ENCODE measurements at regions of chr5 and their contacts with region 1.

Region 1: DNA sequence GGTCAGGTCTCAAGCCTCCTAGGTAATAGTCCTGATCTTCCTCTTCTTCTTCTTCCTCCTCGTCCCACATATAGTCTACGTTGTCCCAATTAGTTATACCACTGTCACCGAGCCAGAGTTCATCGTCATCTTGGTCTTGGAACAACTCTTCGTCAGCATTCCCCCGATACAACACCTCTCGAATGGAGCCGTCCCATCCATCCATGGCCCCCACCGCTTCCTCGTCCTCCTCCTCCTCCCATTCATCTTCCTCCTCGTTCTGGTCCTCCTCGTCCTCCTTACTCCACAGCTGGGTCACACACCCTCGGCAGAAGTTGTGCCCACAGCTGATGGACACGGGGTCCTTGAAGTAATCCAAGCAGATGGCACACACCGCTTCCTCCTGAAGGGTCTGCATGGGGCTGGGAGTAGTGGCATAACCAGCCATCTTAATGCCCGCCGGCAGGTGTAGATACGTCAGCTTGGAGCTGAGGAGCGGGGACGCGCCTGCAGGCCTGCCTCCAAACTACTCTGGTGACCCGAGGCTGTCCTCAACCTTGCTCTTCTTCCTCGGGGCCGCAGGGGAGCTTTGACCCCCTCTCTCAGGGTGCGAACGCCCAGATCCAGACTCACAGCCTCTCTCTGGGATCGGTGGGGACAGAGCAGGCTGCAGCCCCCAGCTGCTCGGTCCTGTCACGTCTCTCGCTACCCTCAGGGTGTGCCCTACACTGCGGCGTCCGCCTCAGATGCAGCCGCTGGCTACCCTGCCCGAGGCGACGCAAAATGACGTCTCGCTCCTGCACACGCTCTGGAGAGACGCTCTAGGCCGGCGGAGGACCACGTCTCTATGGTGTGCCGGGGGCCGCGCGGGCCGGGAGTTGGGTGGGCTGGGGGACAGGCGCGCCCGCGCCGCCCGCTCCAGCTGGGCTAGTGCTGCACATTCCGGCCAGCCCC is at the start of gene TRIM52:
- H3K4me3 ChIP-seq: peak within 1 kb of the TSS; percentile 92
- H3K27ac ChIP-seq: peak within 1 kb of the TSS; percentile 89
- H3K4me1 ChIP-seq: no peaks in the 10 kb centered on the region
- CTCF ChIP-seq: peak; percentile 62; the same call in 1 of the 2 replicates

Region 2: GRCh38 chr5:180769821-180770220 is 490.8 kb before region 1 on chr5:
- CTCF ChIA-PET with region 1: no interaction called
- POLR2A ChIA-PET with region 1: no interaction called
- H3K4me3 ChIP-seq: no peak overlapping the region
- H3K27ac ChIP-seq: no peak overlapping the region
- H3K4me1 ChIP-seq: no peaks in the 10 kb centered on the region
- CTCF ChIP-seq: no peak

Region 3: GRCh38 chr5:181234455-181235306 is 26.0 kb before region 1 on chr5:
- CTCF ChIA-PET with region 1: no interaction called
- POLR2A ChIA-PET with region 1: interaction called, 14 read pairs
- H3K4me3 ChIP-seq: no peak overlapping the region
- H3K27ac ChIP-seq: no peak overlapping the region
- H3K4me1 ChIP-seq: no peaks in the 10 kb centered on the region
- CTCF ChIP-seq: no peak

Region 4: GRCh38 chr5:181243512-181244343 is 16.9 kb before region 1 on chr5 and contains the start of gene RACK1:
- CTCF ChIA-PET with region 1: no interaction called
- POLR2A ChIA-PET with region 1: interaction called, 47 read pairs
- H3K4me3 ChIP-seq: peak within 1 kb of the TSS; percentile 98
- H3K27ac ChIP-seq: peak within 1 kb of the TSS; percentile 99
- H3K4me1 ChIP-seq: no peaks in the 10 kb centered on the region
- CTCF ChIP-seq: peak; percentile 35